MCF 10A (cell line): ENCODE measurements at regions of chr3 and their contacts with region 1.

Region 1: DNA sequence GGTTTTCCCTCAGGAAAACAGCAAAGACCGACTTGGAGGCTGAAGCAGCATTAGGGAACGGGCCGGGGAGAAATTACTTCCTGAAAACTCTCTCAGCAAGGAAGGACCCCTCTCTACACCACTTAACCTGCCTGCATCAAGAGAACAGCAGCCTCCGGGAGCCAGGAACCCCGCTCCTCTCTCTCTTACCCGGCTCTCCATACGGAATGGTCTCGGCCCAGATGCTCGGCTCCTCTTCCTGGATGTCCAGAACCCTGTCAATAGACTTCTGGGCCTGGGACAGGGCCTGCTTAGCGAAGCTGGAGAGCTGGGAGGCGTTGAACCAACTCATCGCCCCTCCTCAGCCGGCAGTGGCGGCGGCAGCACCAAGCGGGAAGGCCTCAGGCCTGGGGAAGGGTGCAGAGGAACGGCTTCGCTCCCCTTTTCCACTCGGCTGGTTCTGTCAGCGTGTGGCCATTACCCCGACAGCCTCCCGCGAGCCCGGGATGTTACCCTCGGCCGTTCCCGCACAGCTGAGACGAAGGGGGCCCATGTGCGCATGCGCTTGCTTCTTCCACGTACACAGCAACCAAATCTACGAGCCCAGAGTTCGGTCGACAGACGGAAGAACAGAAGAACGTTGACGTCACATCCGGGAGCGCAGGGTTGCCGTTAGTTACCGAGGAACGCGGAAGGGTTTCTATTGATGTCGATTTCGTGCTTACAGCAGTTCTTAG is at the start of gene TMF1:
- DNase-seq: peak; percentile 98
- H3K4me3 Mint-ChIP-seq: peak within 1 kb of the TSS; percentile 86
- H3K27ac Mint-ChIP-seq: peak within 1 kb of the TSS; percentile 95
- H3K4me1 Mint-ChIP-seq: peaks cover 20% of the 10 kb centered on the region
- H3K27me3 Mint-ChIP-seq: no peaks in the 10 kb centered on the region
- CTCF ChIP-seq: no peak
- total RNA-seq, gene TMF1: 50.2 and 52.4 TPM in 2 replicates

Region 2: GRCh38 chr3:68447885-68448284 is 604.0 kb before region 1 on chr3:
- CTCF ChIA-PET with region 1: no interaction called
- POLR2A ChIA-PET with region 1: no interaction called
- intact Hi-C with region 1: no loop called
- DNase-seq: no peak
- H3K4me3 Mint-ChIP-seq: no peak overlapping the region
- H3K27ac Mint-ChIP-seq: no peak overlapping the region
- H3K4me1 Mint-ChIP-seq: no peaks in the 10 kb centered on the region
- H3K27me3 Mint-ChIP-seq: no peaks in the 10 kb centered on the region
- CTCF ChIP-seq: no peak

Region 3: DNA sequence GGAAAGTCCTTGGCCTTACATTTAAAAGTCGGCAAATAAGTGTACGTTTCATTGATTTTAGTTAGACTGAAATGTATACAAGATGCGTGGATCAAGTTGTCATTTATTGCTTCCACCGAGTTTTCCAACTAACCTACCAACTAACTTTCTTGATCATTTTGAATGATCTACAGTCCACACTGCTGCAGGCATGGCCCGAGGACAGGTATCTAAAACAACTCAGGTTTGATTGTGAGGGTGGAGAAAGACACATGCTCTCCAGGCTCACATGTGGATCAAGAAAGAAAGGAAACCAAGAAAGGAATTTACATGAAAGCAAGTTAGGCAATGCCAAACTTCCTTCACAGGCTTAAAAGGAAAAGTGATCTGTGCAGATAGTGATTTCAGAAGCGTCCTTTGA is 556.4 kb before region 1 on chr3:
- CTCF ChIA-PET with region 1: no interaction called
- POLR2A ChIA-PET with region 1: no interaction called
- intact Hi-C with region 1: no loop called
- DNase-seq: no peak
- H3K4me3 Mint-ChIP-seq: no peak overlapping the region
- H3K27ac Mint-ChIP-seq: no peak overlapping the region
- H3K4me1 Mint-ChIP-seq: no peaks in the 10 kb centered on the region
- H3K27me3 Mint-ChIP-seq: no peaks in the 10 kb centered on the region
- CTCF ChIP-seq: no peak

Region 4: DNA sequence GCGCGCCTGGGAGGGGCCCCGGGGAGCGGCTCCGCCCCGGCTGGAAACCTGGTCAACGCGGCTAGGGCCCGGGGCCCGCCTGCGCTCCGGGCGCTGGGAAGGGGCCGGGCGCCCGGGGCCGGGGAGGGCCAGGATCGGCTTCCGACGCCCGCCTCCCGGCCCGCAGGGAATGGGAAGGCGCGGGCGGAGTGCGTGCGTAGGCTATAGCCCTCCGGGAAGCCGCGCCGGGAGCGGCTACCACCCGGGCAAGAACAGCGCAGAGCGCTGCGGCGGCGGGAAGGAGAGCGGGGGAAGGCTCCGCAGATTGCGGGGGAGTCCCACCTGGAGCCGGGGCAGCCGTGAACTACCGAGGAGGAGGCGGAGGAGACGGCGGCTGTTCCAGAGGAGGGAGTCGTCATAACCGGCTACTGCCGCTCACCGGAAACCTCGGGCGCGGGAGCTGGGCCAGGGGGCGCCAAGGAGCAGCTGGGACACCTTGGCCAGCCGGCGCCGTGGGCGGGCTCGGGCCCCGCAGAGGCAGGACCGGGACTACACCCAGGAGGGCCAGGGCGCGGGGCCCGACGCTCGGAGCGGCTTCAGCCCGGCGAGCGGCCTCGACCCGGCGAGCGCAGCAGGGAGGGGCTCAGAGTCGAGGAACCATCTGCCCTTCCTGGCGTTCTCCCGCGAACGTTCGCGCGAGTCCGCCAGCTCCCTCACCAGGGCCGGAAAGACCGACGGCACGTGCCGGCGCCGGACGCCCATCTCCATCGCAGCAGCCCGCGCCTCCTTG is 38.5 kb before region 1 on chr3 and contains the start of gene EOGT:
- CTCF ChIA-PET with region 1: interaction called, 3 read pairs
- POLR2A ChIA-PET with region 1: interaction called, 61 read pairs
- intact Hi-C with region 1: no loop called
- DNase-seq: peak; percentile 89
- H3K4me3 Mint-ChIP-seq: peak within 1 kb of the TSS; percentile 89
- H3K27ac Mint-ChIP-seq: peak within 1 kb of the TSS; percentile 91
- H3K4me1 Mint-ChIP-seq: peaks cover 32% of the 10 kb centered on the region
- H3K27me3 Mint-ChIP-seq: no peaks in the 10 kb centered on the region
- CTCF ChIP-seq: peak; percentile 67
- total RNA-seq, gene EOGT: 40.9 and 41.7 TPM in 2 replicates

Region 5: GRCh38 chr3:69033470-69033869 is 18.4 kb before region 1 on chr3:
- CTCF ChIA-PET with region 1: interaction called, 3 read pairs
- POLR2A ChIA-PET with region 1: interaction called, 13 read pairs
- intact Hi-C with region 1: no loop called
- DNase-seq: no peak
- H3K4me3 Mint-ChIP-seq: no peak overlapping the region
- H3K27ac Mint-ChIP-seq: no peak overlapping the region
- H3K4me1 Mint-ChIP-seq: no peaks in the 10 kb centered on the region
- H3K27me3 Mint-ChIP-seq: no peaks in the 10 kb centered on the region
- CTCF ChIP-seq: no peak

Region 6: GRCh38 chr3:69065318-69065964 is 13.5 kb after region 1 on chr3:
- CTCF ChIA-PET with region 1: no interaction called
- POLR2A ChIA-PET with region 1: interaction called, 36 read pairs
- intact Hi-C with region 1: no loop called
- DNase-seq: no peak
- H3K4me3 Mint-ChIP-seq: no peak overlapping the region
- H3K27ac Mint-ChIP-seq: no peak overlapping the region
- H3K4me1 Mint-ChIP-seq: no peaks in the 10 kb centered on the region
- H3K27me3 Mint-ChIP-seq: no peaks in the 10 kb centered on the region
- CTCF ChIP-seq: no peak

Region 7: GRCh38 chr3:69542221-69543079 is 490.5 kb after region 1 on chr3:
- CTCF ChIA-PET with region 1: no interaction called
- POLR2A ChIA-PET with region 1: no interaction called
- intact Hi-C with region 1: no loop called
- DNase-seq: peak; percentile 27
- H3K4me3 Mint-ChIP-seq: peak overlapping the region; percentile 78
- H3K27ac Mint-ChIP-seq: peak overlapping the region; percentile 87
- H3K4me1 Mint-ChIP-seq: peaks cover 16% of the 10 kb centered on the region
- H3K27me3 Mint-ChIP-seq: no peaks in the 10 kb centered on the region
- CTCF ChIP-seq: no peak